ENCODE measurements at regions of chr16 and their contacts with region 1.

Region 1: DNA sequence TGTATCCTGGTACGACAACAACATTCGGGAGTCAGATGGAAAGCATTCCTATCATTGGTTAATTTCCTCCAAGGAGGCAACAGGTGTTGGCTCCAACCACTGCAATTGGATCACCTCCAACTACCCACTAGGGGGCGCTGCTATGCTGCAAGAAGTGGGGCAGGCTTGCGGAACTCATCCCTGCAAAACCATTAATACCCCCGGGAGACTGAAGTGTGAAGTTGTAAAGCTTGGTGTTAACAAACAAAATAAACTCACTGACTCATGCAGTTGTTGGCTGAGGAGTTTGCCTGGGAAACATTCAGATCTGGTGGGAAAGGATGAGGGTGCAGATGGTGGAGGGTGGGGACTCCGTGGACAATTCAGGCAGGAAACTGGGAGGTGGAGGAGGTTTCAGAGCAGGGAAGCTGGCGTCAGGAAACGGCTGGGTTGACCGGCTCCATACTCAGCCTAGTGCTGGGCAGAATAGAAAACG is 84.9 kb downstream of the HS3ST2 start:
- DNase-seq: peak; percentile 43 to 87 (median 73)
- H3K4me3 ChIP-seq: no peak overlapping the region
- H3K27ac ChIP-seq: no peak overlapping the region
- H3K4me1 ChIP-seq: no peaks in the 10 kb centered on the region
- H3K27me3 ChIP-seq: peaks cover 19% of the 10 kb centered on the region
- CTCF ChIP-seq: peak; percentile 61 to 84 (median 80)
- POLR2A ChIP-seq: no peak

Region 2: GRCh38 chr16:23423496-23424049 is 524.7 kb after region 1 on chr16:
- intact Hi-C with region 1: loop called in 1 of 2 experiments (anchors 10 kb)
- DNase-seq: peak; percentile 43 to 87 (median 75)
- H3K4me3 ChIP-seq: no peak overlapping the region
- H3K27ac ChIP-seq: peak overlapping the region in 2 of 5 donors; percentile 76 to 77
- H3K4me1 ChIP-seq: peaks cover 0 to 10% of the 10 kb centered on the region in 2 donors
- H3K27me3 ChIP-seq: no peaks in the 10 kb centered on the region
- CTCF ChIP-seq: no peak
- POLR2A ChIP-seq: no peak